ENCODE measurements at regions of chr1 and their contacts with region 1.

Region 1: DNA sequence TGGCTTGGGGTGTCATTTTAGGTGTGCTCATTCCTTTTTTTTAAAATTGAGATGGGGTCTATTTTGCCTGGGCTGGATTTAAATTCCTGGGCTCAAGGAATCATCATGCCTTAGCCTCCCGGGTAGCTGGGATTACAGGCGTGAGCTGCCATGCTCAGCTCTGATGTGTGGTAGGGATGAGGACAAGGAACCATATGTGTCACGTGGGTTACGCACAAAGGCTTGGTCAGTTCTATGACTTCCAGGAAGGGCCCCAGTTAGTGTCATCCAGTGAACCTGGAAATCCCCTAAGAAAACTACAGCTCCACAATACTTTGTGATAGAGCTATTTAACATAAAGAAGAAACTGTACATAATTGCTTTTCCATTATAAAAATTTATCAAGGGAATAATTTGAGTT is 6.7 kb upstream of the METTL25B start:
- DNase-seq: no peak
- ATAC-seq: no peak
- H3K4me3 ChIP-seq: no peak overlapping the region
- H3K4me3 Mint-ChIP-seq: no peak overlapping the region
- H3K27ac ChIP-seq: no peak overlapping the region
- H3K27ac Mint-ChIP-seq: no peak overlapping the region
- H3K4me1 ChIP-seq: peaks cover 31% of the 10 kb centered on the region
- H3K4me1 Mint-ChIP-seq: peaks cover 18% of the 10 kb centered on the region
- H3K27me3 ChIP-seq: no peaks in the 10 kb centered on the region
- H3K27me3 Mint-ChIP-seq: no peaks in the 10 kb centered on the region
- CTCF ChIP-seq: no peak

Region 2: GRCh38 chr1:156076501-156077429 is 644.8 kb before region 1 on chr1:
- CTCF ChIA-PET with region 1: no interaction called
- POLR2A ChIA-PET with region 1: no interaction called
- intact Hi-C with region 1: no loop called
- DNase-seq: peak in 2 of 9 experiments; percentile 45 to 58
- ATAC-seq: no peak
- H3K4me3 ChIP-seq: peak overlapping the region in 1 of 2 experiments; percentile 8
- H3K4me3 Mint-ChIP-seq: peak overlapping the region; percentile 47
- H3K27ac ChIP-seq: no peak overlapping the region
- H3K27ac Mint-ChIP-seq: no peak overlapping the region
- H3K4me1 ChIP-seq: peaks cover under 1% of the 10 kb centered on the region
- H3K4me1 Mint-ChIP-seq: peaks cover 3% of the 10 kb centered on the region
- H3K27me3 ChIP-seq: peaks cover 0 to 5% of the 10 kb centered on the region in 2 experiments
- H3K27me3 Mint-ChIP-seq: peaks cover 1% of the 10 kb centered on the region
- CTCF ChIP-seq: no peak

Region 3: DNA sequence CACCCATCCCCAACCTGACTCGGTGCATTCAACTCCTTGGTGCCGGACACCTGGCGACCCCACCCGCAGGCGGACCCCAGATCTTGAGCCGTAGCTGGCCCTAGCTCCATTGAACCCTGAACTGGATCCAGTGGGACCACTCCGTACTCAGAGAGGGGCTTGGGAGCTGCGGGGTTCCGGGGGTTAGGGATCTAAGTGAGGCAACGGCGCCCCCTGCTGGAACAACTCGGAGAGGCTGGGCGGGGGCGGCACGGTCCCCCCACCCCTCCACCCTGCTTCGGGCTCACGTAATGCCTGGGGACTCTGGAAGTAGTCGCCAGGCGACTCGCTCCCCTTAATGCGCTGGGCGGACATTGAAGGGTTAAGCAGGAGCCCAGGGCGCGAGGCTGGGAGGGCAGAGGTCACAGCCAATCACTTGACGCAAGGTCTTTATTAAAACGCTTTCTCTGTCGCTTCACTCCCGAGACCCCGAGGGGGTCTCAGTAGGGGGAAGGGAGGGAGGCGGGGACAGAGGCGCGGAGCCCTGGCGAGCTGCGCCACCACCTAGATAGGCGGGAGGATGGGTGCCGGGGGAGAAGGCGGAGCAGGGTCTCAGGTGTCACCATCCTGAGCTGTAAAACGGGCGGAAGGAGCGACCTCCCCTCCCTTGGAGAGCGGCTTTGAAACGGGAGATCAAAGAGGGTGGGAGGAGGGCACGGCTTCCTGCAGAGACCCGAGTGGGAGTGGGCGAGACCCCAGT is 15.4 kb before region 1 on chr1:
- CTCF ChIA-PET with region 1: interaction called, 144 read pairs
- POLR2A ChIA-PET with region 1: interaction called, 28 read pairs
- intact Hi-C with region 1: loop called (anchors 1 kb)
- DNase-seq: peak; percentile 36 to 81 (median 68)
- ATAC-seq: peak; percentile 66
- H3K4me3 ChIP-seq: peak overlapping the region; percentile 52 to 89
- H3K4me3 Mint-ChIP-seq: peak overlapping the region; percentile 89
- H3K27ac ChIP-seq: peak overlapping the region; percentile 43 to 47
- H3K27ac Mint-ChIP-seq: peak overlapping the region; percentile 73
- H3K4me1 ChIP-seq: peaks cover 35% of the 10 kb centered on the region
- H3K4me1 Mint-ChIP-seq: peaks cover 32% of the 10 kb centered on the region
- H3K27me3 ChIP-seq: peaks cover 8 to 24% of the 10 kb centered on the region in 2 experiments
- H3K27me3 Mint-ChIP-seq: peaks cover 9% of the 10 kb centered on the region
- CTCF ChIP-seq: peak; percentile 82

Region 4: DNA sequence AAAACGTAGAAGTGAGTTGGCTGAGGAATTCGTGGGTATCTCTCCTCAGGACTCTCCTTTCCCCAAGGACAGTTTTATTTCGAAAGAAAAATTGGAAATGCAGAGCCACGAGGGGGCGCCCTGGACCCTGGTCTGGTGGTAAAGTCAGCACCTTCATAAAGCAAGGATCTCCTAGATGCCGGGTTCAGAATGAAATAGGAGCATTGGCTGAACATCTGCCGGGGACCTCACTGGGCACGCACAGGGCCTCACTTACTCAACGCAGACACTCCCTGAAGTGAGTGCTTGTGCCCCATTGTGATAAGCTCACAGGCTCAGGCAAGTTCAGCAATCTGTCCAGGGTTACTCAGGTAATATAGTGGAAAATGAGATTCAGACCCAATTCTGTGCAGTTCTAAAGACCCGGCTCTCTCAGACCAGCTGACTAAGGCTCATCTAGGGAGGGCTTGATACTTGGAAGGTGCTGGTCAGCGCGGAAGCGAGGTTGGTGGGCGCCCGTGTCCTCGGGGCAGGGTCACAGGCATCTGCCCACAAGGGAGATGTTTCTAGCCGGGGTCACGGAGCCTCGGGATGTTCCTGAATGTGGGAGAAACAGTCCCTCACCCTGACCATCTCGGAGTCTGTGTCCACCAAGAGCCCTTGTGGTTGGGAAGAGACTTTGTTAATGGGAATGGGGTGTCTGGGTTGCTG is 472.3 kb after region 1 on chr1:
- CTCF ChIA-PET with region 1: no interaction called
- POLR2A ChIA-PET with region 1: no interaction called
- intact Hi-C with region 1: no loop called
- DNase-seq: peak in 8 of 9 experiments; percentile 7 to 58 (median 42)
- ATAC-seq: no peak
- H3K4me3 ChIP-seq: no peak overlapping the region
- H3K4me3 Mint-ChIP-seq: no peak overlapping the region
- H3K27ac ChIP-seq: no peak overlapping the region
- H3K27ac Mint-ChIP-seq: no peak overlapping the region
- H3K4me1 ChIP-seq: no peaks in the 10 kb centered on the region
- H3K4me1 Mint-ChIP-seq: peaks cover 6% of the 10 kb centered on the region
- H3K27me3 ChIP-seq: no peaks in the 10 kb centered on the region
- H3K27me3 Mint-ChIP-seq: peaks cover 40% of the 10 kb centered on the region
- CTCF ChIP-seq: peak; percentile 66